ENCODE measurements at regions of chr12 and their contacts with region 1.

Region 1: GRCh38 chr12:26195641-26196420 is 458 bp downstream of the SSPN start:
- DNase-seq: peak; percentile 19
- H3K4me3 ChIP-seq: peak overlapping the region; percentile 53 to 55
- H3K27ac ChIP-seq: peak overlapping the region; percentile 68 to 81
- H3K4me1 ChIP-seq: no peaks in the 10 kb centered on the region
- H3K27me3 ChIP-seq: no peaks in the 10 kb centered on the region
- CTCF ChIP-seq: no peak
- POLR2A ChIP-seq: peak; percentile 30

Region 2: DNA sequence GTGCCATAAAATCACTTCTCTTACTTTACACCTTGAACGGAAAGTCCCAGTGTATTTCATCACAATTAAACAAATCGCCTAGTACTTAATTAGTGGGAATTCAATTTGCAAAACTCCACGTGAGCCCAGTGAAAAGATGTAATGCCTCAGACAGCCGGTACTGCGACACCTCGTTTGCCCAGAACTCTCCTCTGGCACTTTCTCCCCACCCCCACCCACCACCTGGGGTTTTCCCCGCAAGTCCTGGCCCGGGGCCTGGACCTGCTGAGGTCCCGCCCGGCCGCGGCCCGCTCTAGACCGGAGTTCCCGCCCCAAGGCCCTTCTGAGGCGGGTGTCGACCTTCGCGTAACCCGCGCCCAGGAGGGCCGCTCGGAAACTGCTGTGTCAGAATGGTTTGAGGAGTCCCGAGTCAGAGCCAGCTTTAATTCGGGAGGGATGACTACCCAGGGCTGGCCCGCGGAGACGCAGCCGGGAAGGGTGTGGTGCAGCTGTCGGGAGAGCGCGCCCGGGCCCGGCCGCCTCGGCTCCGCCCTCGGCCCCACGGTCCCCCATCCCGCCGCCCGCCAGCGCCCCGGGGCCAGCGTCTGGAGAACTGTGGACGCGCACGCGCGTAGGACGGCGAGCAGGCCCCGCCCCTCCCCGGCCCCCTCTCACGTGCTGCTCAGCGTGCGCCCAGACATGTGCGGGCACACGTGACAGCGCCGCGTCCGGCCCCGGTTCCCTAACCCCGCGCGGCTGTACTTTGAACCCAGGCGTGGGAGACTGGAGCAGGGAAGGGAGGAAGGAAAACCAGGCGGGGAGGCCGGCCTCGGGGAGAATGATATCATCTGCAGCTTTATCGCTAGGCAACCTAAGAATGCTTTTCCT is 81.7 kb before region 1 on chr12:
- intact Hi-C with region 1: loop called (anchors 5 kb)
- DNase-seq: peak; percentile 88
- H3K4me3 ChIP-seq: peak overlapping the region; percentile 46 to 48
- H3K27ac ChIP-seq: peak overlapping the region; percentile 88 to 92
- H3K4me1 ChIP-seq: no peaks in the 10 kb centered on the region
- H3K27me3 ChIP-seq: no peaks in the 10 kb centered on the region
- CTCF ChIP-seq: peak in 2 of 4 experiments; percentile 47
- POLR2A ChIP-seq: peak; percentile 85

Region 3: DNA sequence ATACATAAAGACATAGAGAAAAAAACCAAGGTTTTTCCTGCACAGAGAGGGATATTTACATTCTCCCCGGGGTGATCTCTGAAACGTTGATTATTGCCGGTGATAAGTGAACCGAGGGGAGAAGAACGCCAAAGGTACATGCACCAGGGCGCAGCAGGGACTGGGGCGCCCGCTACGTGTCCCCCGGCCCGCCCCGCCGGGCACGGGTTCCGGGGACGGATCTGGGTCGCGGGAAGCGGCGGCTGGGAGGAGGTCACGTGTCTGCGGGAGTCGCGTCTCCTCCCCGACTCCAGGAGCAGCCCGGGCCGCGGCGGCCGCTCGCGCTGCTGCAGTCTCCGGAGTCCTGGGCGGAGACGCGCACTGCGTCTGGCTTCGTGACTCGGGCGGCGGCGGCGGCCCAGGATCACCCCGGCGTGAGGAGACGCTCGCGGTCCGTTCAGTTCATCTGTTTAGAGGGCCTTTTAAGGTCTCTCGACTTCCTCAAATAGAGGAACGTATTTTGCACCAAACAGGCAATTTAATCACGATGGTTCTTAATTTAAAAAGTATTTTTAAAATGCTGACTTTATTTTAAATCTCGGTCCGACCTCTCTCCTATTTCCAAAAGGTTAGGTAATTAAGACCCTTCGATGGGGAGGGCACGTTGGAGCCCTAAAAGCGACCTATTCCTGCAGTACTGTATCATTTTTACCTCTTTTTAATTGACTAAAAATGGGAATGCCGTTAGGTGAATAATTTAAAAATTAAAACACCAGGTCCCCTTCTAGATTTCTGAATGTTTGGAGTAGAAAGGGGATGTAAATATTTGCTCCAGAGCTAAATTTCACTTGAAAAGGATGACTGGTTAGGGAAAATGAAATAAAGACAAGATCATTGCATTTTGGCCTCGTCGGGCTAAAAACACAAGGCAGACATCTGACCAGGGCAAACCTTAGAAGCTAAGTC is 69.2 kb before region 1 on chr12:
- intact Hi-C with region 1: loop called (anchors 5 kb)
- DNase-seq: peak; percentile 87
- H3K4me3 ChIP-seq: peak overlapping the region; percentile 52 to 60
- H3K27ac ChIP-seq: peak overlapping the region; percentile 92 to 93
- H3K4me1 ChIP-seq: no peaks in the 10 kb centered on the region
- H3K27me3 ChIP-seq: no peaks in the 10 kb centered on the region
- CTCF ChIP-seq: peak in 2 of 4 experiments; percentile 23 to 40
- POLR2A ChIP-seq: peak; percentile 55

Region 4: DNA sequence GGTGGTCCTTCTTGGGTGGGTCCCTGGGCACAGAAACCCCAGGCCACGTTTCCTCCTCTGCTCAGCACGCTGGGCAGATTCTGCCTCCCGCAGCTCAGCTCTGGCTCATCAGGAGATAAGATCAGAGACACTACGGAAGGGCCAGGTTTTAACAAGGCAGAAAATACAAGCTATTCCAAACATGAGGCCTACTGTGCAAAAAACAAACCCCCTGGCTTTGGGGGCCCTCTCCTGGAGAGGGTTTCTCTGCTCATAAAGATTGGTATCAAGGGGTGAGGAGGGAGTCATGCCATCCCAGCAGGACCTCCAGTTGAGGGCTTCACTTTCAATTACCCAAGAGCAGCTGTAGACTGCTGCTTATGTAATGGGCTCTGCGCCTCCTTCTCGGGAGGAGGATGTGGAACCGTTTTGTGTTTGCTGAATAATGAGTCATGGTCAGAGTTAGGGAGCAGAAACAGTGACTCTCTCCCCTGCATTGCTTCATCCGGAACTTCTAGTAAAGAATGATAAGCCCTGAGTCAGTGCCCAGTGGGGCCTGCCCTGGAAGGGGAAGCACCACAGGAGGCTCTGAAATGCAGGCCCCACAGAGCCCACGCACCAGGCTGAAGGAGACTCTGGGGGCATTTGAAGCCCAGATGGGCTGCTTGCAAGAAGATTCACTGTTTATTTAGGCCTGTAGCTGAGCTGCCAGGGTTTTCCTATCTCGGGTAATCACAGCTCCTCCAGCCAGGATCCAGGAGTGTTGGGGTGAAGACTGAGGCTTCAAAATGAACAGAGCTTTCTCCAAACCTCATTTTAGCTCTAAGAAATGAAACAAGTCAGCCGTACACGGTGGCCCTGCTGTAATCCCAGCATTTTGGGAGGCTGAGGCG is 78.8 kb after region 1 on chr12:
- intact Hi-C with region 1: loop called (anchors 5 kb)
- DNase-seq: peak; percentile 85
- H3K4me3 ChIP-seq: no peak overlapping the region
- H3K27ac ChIP-seq: peak overlapping the region; percentile 74 to 80
- H3K4me1 ChIP-seq: peaks cover 5% of the 10 kb centered on the region
- H3K27me3 ChIP-seq: no peaks in the 10 kb centered on the region
- CTCF ChIP-seq: peak in 1 of 4 experiments; percentile 8
- POLR2A ChIP-seq: no peak